Common myeloid progenitor, CD34-positive (primary cell): ENCODE measurements at regions of chr1 and their contacts with region 1.

Region 1: GRCh38 chr1:47257224-47257623 is 25.2 kb upstream of the TAL1 start:
- DNase-seq: peak; percentile 52 to 85 (median 84)
- H3K4me3 ChIP-seq: no peak overlapping the region
- H3K27ac ChIP-seq: peak overlapping the region in 1 of 2 experiments; percentile 27
- H3K4me1 ChIP-seq: peaks cover 0 to 19% (median 2%) of the 10 kb centered on the region in 4 experiments
- H3K27me3 ChIP-seq: no peaks in the 10 kb centered on the region

Region 2: DNA sequence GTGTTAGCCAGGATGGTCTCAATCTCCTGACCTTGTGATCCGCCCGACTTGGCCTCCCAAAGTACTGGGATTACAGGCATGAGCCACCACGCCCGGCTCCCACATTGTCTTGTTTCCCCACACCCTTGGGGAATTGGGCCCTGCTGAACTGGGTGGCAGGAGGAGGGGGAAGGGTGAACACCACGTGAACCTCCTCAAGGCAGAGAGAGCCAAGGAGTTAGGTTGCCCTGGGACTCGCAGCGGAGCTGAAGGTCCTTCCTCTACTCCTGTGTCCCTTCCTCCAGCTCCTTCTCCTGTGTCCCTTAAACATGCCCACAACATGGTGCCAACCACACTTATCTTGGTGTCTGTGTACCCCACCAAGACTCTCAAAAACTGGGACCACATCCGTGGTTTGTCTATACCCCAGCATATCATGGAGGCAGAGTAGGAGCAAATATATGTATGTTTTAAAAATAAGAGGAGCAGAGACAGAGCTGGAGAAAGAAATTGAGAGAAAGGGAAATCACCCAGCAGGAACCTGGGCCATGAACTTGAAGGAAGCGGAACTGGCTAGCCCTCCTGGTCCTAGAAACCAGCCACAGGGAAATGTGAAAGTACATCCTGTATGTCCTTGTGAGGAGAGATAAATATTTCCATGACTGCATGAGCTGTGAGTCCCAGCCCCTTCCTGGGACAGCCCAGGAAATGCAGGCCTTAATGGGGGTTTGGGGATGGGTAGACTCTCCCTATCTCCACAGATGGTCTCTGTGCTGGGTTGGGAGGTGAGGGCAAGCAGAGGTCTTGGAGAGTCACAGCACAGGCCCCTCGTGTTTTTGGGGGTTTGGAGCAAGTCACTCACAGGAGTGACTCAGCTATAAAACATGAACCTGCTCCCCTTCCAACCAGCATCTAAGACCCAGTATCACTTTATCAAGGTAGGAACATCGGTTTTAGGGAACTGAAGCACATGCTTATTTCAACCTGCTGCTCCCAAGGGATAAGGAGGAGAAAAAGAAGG is 15.8 kb before region 1 on chr1:
- CTCF ChIA-PET with region 1: interaction called, 19 read pairs
- POLR2A ChIA-PET with region 1: interaction called, 3 read pairs
- DNase-seq: peak in 2 of 3 donors; percentile 62 to 72
- H3K4me3 ChIP-seq: no peak overlapping the region
- H3K27ac ChIP-seq: no peak overlapping the region
- H3K4me1 ChIP-seq: peaks cover 4 to 38% (median 32%) of the 10 kb centered on the region in 4 experiments
- H3K27me3 ChIP-seq: no peaks in the 10 kb centered on the region

Region 3: DNA sequence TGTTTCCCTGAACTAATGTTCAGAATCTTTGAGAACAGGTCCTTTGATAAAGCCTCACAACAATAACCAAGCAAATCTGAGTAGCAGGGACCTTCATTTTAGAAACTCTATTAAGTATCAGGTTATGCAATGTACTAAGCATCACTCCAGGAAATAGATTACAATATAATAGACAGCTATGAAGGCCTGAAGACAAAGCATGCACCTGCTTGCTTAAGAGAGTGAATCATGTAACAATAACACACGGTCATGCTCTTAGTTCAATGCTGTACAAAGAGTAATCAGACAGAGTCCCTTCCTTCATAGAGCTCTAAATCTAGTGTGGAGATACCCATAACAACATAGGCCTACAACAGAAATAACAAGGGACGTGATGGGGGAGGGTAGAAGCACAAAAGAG is 68.3 kb after region 1 on chr1:
- CTCF ChIA-PET with region 1: no interaction called
- POLR2A ChIA-PET with region 1: no interaction called
- DNase-seq: peak in 1 of 3 donors; percentile 9
- H3K4me3 ChIP-seq: no peak overlapping the region
- H3K27ac ChIP-seq: no peak overlapping the region
- H3K4me1 ChIP-seq: no peaks in the 10 kb centered on the region
- H3K27me3 ChIP-seq: no peaks in the 10 kb centered on the region

Region 4: DNA sequence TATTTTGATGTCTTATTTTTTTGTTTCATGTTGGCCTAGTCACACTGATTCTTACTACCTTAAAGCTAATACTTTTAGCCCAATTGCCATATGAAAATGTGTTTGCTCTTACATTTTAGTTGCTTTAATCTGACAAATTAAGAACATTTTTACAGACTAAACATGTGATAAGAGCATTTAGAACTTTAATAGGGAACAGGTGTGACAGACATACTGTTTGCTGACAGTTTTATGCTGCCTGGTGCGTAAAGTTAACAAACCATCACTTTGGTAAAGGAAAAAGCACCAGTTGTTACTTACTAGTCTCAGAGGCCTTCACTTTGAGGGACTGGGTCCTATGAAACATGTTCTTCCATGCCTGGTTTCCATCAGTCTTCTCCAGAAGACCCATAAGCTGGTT is 91.0 kb after region 1 on chr1:
- CTCF ChIA-PET with region 1: no interaction called
- POLR2A ChIA-PET with region 1: no interaction called
- DNase-seq: no peak
- H3K4me3 ChIP-seq: no peak overlapping the region
- H3K27ac ChIP-seq: no peak overlapping the region
- H3K4me1 ChIP-seq: peaks cover 0 to 5% (median 2%) of the 10 kb centered on the region in 4 experiments
- H3K27me3 ChIP-seq: no peaks in the 10 kb centered on the region

Region 5: DNA sequence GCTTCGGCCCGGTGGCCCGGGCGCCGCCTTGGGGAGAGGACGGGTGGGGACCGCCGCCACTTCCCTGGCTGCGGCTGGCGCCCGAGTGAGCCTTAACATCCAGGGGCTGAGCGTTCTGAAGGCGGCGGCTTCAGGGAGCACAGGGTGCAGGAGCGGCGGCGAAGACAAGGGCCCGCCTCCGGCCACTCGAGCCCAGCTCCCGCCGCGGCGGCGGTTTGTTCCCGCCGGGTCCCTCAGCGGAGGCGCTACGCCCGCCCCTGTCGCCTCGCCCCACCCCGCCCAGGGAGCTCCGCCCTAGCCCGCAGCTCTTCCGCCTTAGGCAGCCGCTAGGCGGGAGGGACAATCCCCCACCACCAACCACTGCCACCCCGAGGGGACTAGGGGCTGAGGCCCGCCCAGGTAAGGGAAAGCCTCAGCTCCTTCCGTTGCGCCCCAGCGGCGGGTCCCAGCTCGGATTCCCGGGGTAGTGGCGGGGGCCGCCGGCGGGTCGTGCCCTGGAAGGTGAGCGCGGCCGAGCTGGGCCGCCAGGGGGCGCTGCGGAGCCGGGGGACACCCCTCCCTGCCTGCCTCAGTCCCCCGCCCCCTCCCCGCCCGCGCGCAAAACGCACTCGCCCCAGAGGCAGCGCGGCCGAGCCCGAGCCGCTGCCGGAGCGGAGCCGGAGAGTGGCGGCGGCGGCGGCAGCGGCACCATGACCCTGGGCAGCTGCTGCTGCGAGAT is 180.4 kb after region 1 on chr1 and contains the start of gene FOXD2:
- CTCF ChIA-PET with region 1: no interaction called
- POLR2A ChIA-PET with region 1: no interaction called
- DNase-seq: peak; percentile 83 to 91 (median 88)
- H3K4me3 ChIP-seq: peak within 1 kb of the TSS; percentile 40 to 78 (median 70)
- H3K27ac ChIP-seq: peak within 1 kb of the TSS in 1 of 2 experiments; percentile 34
- H3K4me1 ChIP-seq: peaks cover 0 to 49% (median 35%) of the 10 kb centered on the region in 4 experiments
- H3K27me3 ChIP-seq: peaks cover 11 to 91% (median 61%) of the 10 kb centered on the region in 5 experiments

Region 6: GRCh38 chr1:47725000-47725473 is 467.8 kb after region 1 on chr1:
- CTCF ChIA-PET with region 1: no interaction called
- POLR2A ChIA-PET with region 1: no interaction called
- DNase-seq: peak in 2 of 3 donors; percentile 35 to 46
- H3K4me3 ChIP-seq: peak overlapping the region in 3 of 7 experiments; percentile 23 to 61 (median 41)
- H3K27ac ChIP-seq: no peak overlapping the region
- H3K4me1 ChIP-seq: peaks cover 0 to 26% (median 10%) of the 10 kb centered on the region in 4 experiments
- H3K27me3 ChIP-seq: peaks cover 0 to 39% (median 24%) of the 10 kb centered on the region in 5 experiments